Endothelial cell of umbilical vein (primary cell): ENCODE measurements at regions of chr4 and their contacts with region 1.

Region 1: DNA sequence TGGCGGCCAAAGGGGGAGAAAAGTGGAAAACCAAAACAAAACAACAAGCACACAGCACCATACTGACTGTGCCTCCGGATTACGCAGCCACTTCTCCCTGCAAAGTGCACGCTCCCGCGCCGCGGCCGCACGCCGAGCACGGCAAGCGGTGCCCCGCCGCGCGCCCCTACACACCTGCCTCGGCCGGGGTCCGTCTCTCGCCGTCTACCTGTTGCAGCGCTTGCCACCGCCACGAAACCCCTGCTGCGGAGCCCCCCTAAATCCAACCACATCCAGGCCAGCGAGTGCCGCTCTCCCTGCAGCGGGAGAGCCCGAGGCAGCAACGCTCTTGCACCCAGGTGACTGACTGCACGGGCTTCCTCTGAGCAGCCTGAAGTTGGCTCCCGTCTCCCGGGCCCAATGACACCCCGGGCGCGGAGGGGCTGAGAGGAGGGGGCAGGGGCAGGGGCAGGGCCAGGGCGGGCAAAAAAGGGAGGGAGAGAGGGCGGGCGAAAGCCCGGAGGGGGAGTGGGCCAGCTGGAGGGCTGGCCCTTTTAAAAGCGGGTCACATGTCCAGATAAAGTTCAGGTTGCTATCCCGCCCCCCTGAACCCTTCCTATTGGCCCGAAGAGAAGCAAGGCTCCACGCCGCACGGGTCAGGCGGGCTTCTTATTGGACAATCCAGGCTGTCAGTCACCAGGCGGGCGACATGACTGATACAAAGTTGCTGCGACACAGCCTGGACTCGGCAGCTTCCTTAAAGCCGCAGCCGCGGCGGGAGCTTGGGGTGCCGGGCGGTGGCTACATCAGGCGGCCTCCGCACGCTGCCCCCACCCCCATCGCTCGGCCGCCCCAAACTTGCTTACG is at the start of gene NR3C2:
- DNase-seq: peak; percentile 99
- H3K4me3 ChIP-seq: peak within 1 kb of the TSS; percentile 88 to 98 (median 94)
- H3K27ac ChIP-seq: peak within 1 kb of the TSS; percentile 63
- H3K4me1 ChIP-seq: peaks cover 23% of the 10 kb centered on the region
- H3K27me3 ChIP-seq: no peaks in the 10 kb centered on the region
- CTCF ChIP-seq: no peak
- POLR2A ChIP-seq: peak; percentile 98
- total RNA-seq, gene NR3C2: 15.9 and 16.4 TPM in 2 replicates

Region 2: DNA sequence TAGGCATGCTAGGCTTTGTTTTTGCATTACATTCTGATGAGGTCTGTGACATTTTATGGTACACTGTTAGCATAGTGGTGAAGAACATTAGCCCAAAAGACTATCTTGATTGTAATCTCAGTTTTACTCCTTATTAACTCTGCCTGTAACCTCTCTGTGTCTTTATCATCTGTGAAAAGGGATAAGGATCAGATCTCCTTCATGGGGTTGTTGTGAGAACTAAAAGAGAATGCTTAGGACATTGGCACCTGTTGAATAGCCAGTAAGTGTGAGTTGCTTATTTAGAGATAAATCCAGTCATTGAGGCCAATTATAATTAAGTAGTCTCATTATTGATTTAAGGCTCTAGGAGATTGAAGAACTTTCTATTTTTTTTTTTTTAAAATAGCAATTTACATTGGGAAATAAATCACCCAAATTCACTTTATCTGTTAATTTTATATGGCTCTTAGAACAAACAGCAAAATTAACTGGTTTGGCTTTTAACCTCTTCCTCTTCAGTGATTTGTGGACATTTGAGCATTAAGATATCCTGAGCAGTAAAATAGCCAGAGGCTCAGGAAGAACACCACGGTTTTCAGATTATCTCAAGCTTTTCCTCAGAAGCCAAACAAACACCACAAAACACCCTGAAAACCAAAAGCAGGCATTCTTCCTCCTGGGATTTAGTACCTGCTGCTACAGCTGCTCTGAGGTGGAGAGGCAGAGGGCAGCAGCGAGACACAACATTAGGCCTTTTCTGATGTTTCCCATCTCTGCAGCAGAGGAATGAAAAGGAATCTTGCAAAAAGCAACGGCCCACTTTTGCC is 517.4 kb before region 1 on chr4:
- CTCF ChIA-PET with region 1: no interaction called
- POLR2A ChIA-PET with region 1: interaction called, 3 read pairs
- dilution Hi-C with region 1: no loop called
- intact Hi-C with region 1: loop called (anchors 2 kb)
- DNase-seq: peak; percentile 65
- H3K4me3 ChIP-seq: no peak overlapping the region
- H3K27ac ChIP-seq: no peak overlapping the region
- H3K4me1 ChIP-seq: peaks cover 19% of the 10 kb centered on the region
- H3K27me3 ChIP-seq: no peaks in the 10 kb centered on the region
- CTCF ChIP-seq: peak; percentile 28 to 64
- POLR2A ChIP-seq: no peak

Region 3: GRCh38 chr4:148225639-148226038 is 216.6 kb before region 1 on chr4:
- CTCF ChIA-PET with region 1: no interaction called
- POLR2A ChIA-PET with region 1: interaction called, 3 read pairs
- dilution Hi-C with region 1: no loop called
- intact Hi-C with region 1: loop called (anchors 2 kb)
- DNase-seq: peak; percentile 70
- H3K4me3 ChIP-seq: no peak overlapping the region
- H3K27ac ChIP-seq: no peak overlapping the region
- H3K4me1 ChIP-seq: peaks cover 19% of the 10 kb centered on the region
- H3K27me3 ChIP-seq: no peaks in the 10 kb centered on the region
- CTCF ChIP-seq: no peak
- POLR2A ChIP-seq: no peak

Region 4: GRCh38 chr4:148300877-148301276 is 141.3 kb before region 1 on chr4:
- CTCF ChIA-PET with region 1: no interaction called
- POLR2A ChIA-PET with region 1: no interaction called
- dilution Hi-C with region 1: no loop called
- intact Hi-C with region 1: no loop called
- DNase-seq: no peak
- H3K4me3 ChIP-seq: no peak overlapping the region
- H3K27ac ChIP-seq: no peak overlapping the region
- H3K4me1 ChIP-seq: no peaks in the 10 kb centered on the region
- H3K27me3 ChIP-seq: no peaks in the 10 kb centered on the region
- CTCF ChIP-seq: no peak
- POLR2A ChIP-seq: no peak

Region 5: GRCh38 chr4:148376151-148376550 is 66.1 kb before region 1 on chr4:
- CTCF ChIA-PET with region 1: no interaction called
- POLR2A ChIA-PET with region 1: interaction called, 4 read pairs
- dilution Hi-C with region 1: no loop called
- intact Hi-C with region 1: loop called (anchors 1 kb)
- DNase-seq: peak; percentile 91
- H3K4me3 ChIP-seq: peak overlapping the region in 1 of 3 experiments; percentile 33
- H3K27ac ChIP-seq: peak overlapping the region; percentile 46
- H3K4me1 ChIP-seq: peaks cover 11% of the 10 kb centered on the region
- H3K27me3 ChIP-seq: no peaks in the 10 kb centered on the region
- CTCF ChIP-seq: no peak
- POLR2A ChIP-seq: no peak

Region 6: DNA sequence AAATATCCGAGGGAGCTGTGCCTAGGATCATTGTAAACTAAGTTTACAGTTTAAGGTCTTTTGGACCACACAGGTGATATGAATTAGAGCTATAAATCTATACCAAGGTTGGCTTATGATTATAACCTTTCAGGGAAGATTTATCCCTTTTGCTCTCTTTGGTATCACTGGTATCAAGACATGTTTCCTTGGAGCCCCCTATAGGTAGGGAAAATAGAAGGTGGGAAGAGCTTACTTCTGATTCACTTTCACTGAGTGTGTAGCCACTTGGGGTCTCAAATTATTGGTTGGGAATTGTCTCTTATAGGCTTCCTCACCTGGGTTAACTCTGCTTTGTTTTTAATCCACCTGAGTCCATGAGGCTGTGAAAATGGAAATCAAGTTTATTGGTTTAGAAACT is 262.1 kb after region 1 on chr4:
- CTCF ChIA-PET with region 1: interaction called, 4 read pairs
- POLR2A ChIA-PET with region 1: no interaction called
- dilution Hi-C with region 1: no loop called
- intact Hi-C with region 1: loop called (anchors 1 kb)
- DNase-seq: peak; percentile 12
- H3K4me3 ChIP-seq: no peak overlapping the region
- H3K27ac ChIP-seq: no peak overlapping the region
- H3K4me1 ChIP-seq: no peaks in the 10 kb centered on the region
- H3K27me3 ChIP-seq: no peaks in the 10 kb centered on the region
- CTCF ChIP-seq: peak in 1 of 2 donors; percentile 7
- POLR2A ChIP-seq: no peak

Region 7: GRCh38 chr4:148852092-148852699 is 410.0 kb after region 1 on chr4:
- CTCF ChIA-PET with region 1: no interaction called
- POLR2A ChIA-PET with region 1: no interaction called
- dilution Hi-C with region 1: no loop called
- intact Hi-C with region 1: loop called (anchors 2 kb)
- DNase-seq: peak; percentile 47
- H3K4me3 ChIP-seq: no peak overlapping the region
- H3K27ac ChIP-seq: peak overlapping the region; percentile 5
- H3K4me1 ChIP-seq: peaks cover 22% of the 10 kb centered on the region
- H3K27me3 ChIP-seq: no peaks in the 10 kb centered on the region
- CTCF ChIP-seq: peak in 1 of 2 donors; percentile 14
- POLR2A ChIP-seq: no peak

Region 8: DNA sequence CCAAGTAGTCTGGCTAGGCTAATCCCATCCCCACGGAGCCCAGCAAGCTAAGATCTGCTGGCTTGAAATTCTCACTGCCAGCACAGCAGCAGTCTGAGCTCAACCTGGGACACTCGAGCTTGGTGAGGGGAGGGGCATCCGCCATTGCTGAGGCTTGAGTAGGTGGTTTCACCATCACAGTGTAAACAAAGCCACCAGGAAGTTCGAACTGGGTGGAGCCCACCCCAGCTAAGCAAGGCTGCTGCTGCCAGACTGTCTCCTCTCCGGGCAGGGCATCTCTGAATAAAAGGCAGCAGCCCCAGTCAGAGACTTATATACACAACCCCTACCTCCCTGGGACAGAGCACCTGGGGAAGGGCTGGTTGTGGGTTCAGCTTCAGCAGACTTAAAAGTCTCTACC is 733.8 kb after region 1 on chr4:
- CTCF ChIA-PET with region 1: no interaction called
- POLR2A ChIA-PET with region 1: no interaction called
- dilution Hi-C with region 1: no loop called
- intact Hi-C with region 1: no loop called
- DNase-seq: no peak
- H3K4me3 ChIP-seq: no peak overlapping the region
- H3K27ac ChIP-seq: no peak overlapping the region
- H3K4me1 ChIP-seq: no peaks in the 10 kb centered on the region
- H3K27me3 ChIP-seq: no peaks in the 10 kb centered on the region
- CTCF ChIP-seq: no peak
- POLR2A ChIP-seq: no peak